Vagina (tissue), 2 donors: ENCODE measurements at regions of chr7 and their contacts with region 1.

Region 1: DNA sequence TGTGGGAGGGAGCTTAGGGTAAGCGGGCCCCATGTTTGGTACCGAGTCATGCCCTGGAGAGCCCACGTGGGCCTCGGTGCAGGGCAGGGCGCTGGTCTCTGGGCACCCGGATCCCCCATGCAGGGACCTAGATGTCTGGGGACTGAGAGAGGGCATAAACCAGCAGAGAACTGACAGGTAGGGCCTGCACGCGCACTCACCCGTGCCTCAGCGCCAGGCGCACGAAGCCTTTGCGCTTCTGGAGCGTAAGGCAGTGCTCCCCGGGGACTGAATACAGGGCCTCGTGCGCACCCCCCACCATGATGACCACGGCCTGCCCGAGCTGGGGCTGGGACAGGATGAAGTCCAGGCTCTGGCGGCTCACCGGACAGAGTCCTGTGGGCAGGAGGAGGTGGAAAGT is 2.8 kb downstream of the MOGAT3 start:
- DNase-seq: no peak
- H3K4me3 ChIP-seq: no peak overlapping the region
- H3K27ac ChIP-seq: no peak overlapping the region
- H3K4me1 ChIP-seq: peaks cover 8% of the 10 kb centered on the region
- H3K27me3 ChIP-seq: no peaks in the 10 kb centered on the region
- CTCF ChIP-seq: no peak
- POLR2A ChIP-seq: no peak

Region 2: DNA sequence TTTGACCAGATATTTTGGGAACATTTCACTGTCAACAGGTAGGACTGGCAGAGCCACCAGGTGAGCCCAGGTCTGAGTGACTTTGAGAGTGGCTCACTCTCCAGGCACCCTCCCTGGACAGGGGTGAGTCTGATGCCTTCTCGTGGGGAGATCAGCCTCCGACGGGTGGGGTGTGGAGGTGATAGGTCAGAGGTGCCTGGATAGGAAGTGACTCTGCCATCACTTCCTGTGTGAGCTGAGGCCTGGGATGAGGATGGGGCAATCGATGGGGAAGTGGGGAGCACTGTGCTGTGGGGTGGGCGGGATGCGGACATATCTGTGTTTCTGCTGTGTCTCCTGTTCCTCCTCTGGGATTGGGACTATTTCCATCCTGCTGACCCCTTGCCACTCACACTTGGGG is 89.0 kb after region 1 on chr7:
- intact Hi-C with region 1: loop called (anchors 10 kb)
- DNase-seq: no peak
- H3K4me3 ChIP-seq: no peak overlapping the region
- H3K27ac ChIP-seq: no peak overlapping the region
- H3K4me1 ChIP-seq: no peaks in the 10 kb centered on the region
- H3K27me3 ChIP-seq: no peaks in the 10 kb centered on the region
- CTCF ChIP-seq: no peak
- POLR2A ChIP-seq: no peak

Region 3: GRCh38 chr7:101479217-101479616 is 281.2 kb after region 1 on chr7:
- intact Hi-C with region 1: no loop called
- DNase-seq: no peak
- H3K4me3 ChIP-seq: no peak overlapping the region
- H3K27ac ChIP-seq: no peak overlapping the region
- H3K4me1 ChIP-seq: no peaks in the 10 kb centered on the region
- H3K27me3 ChIP-seq: no peaks in the 10 kb centered on the region
- CTCF ChIP-seq: no peak
- POLR2A ChIP-seq: no peak